Thyroid gland (tissue), 4 donors: ENCODE measurements at regions of chr4 and their contacts with region 1.

Region 1: DNA sequence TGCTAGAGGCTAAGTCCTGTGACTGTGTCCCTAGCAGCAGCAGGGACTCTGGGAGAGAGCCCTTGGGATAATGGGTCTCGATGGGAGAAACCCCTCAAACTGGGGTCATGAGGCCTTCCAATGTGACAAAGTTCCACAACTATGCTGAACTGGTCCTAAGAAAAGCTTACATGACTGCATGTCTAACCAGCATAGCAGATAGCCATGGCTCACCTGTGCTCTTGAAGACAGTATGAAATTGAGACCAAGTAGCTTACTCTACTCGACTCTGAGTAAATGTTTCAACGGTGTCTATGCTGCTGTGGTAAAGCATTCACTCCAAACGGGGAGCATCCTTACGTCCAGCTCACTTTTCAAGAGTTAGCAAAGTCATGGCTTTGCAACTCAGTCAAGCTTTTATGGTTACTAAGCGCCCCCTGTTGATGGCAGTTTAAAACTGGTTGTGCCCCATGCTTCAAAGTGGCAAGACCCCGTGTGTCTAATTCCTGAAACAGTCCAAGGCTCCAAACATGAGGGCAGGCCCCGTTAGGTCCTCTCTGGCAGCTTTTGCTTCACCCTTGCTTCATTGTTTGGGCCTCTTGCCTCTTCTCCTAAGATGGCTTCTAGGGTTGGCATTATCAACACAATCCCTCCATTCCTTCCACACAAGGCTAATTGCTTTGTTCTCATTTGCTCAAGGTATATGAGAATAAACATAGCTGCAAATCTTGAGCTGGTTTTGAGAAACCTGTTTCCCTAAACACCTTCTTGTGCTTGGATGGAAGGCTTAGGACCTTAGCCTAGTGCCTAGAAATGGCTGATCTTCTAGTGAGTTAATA is 46.6 kb downstream of the CCNG2 start:
- DNase-seq: peak; percentile 58 to 65
- H3K4me3 ChIP-seq: no peak overlapping the region
- H3K27ac ChIP-seq: no peak overlapping the region
- H3K4me1 ChIP-seq: no peaks in the 10 kb centered on the region
- H3K27me3 ChIP-seq: no peaks in the 10 kb centered on the region
- CTCF ChIP-seq: peak; percentile 37 to 84 (median 71)
- POLR2A ChIP-seq: no peak

Region 2: DNA sequence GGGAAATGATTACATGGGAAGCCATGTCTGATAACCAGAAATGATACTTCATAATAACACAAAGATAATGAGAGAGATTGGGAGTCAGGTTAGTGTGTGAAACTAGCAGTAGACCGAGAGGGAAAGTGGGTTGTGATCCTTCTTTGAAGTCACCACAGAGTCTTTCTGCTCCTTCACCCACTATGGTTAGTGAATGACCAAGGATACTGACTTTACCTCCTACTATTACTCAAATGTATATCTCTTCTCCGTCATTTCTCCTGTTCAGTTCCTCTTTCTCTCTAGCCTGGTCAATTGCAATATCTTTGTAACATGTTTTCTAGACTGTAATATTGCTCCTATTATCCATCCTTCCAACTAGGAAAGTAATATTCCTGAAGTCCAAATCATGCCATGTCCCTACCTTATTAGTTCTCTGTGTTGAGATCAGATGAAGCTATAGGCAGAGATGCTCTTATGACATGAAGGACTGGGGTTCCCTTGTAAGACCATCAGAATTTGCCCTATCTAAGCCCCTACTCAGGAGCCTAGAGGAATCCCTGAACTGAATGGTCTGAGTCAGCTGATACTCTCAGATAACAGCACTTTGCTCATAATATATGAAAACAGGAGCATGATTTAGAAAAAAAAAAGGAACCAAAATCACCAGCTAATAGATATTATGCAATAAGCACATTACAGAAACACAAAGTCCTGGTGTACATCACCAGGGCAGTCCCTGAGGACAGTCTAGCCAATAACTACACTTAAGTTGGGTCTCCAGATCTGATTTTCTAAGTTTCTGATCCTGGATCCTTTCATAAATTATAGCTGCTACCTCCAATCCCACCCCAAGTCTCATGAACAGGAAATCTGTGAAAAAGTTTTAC is 687.4 kb before region 1 on chr4:
- intact Hi-C with region 1: loop called (anchors 5 kb)
- DNase-seq: no peak
- H3K4me3 ChIP-seq: no peak overlapping the region
- H3K27ac ChIP-seq: no peak overlapping the region
- H3K4me1 ChIP-seq: no peaks in the 10 kb centered on the region
- H3K27me3 ChIP-seq: no peaks in the 10 kb centered on the region
- CTCF ChIP-seq: no peak
- POLR2A ChIP-seq: no peak

Region 3: GRCh38 chr4:77095101-77095821 is 108.3 kb before region 1 on chr4:
- intact Hi-C with region 1: loop called (anchors 10 kb)
- DNase-seq: peak; percentile 82 to 85
- H3K4me3 ChIP-seq: no peak overlapping the region
- H3K27ac ChIP-seq: no peak overlapping the region
- H3K4me1 ChIP-seq: no peaks in the 10 kb centered on the region
- H3K27me3 ChIP-seq: no peaks in the 10 kb centered on the region
- CTCF ChIP-seq: peak; percentile 55 to 86 (median 80)
- POLR2A ChIP-seq: no peak

Region 4: DNA sequence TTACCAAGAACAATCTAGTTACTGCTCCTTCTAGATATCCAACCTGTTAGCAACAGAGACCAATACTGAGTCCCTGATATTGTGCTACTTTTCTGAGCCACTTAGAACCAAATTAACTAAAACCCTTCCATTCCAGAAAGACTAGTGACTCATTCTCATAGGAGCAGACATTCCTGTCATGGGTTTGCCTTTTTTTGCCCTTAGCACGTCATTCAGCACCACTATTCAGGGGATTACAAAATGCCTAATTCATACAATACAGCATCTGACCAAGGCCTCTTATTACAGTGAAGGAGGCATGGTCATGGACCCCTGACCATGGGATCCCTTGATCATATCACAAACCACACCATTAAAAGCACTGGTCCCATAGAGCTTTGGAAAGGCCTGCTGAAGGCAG is 278.3 kb after region 1 on chr4:
- intact Hi-C with region 1: no loop called
- DNase-seq: no peak
- H3K4me3 ChIP-seq: no peak overlapping the region
- H3K27ac ChIP-seq: no peak overlapping the region
- H3K4me1 ChIP-seq: no peaks in the 10 kb centered on the region
- H3K27me3 ChIP-seq: no peaks in the 10 kb centered on the region
- CTCF ChIP-seq: no peak
- POLR2A ChIP-seq: no peak